ENCODE measurements at regions of chr19 and their contacts with region 1.

Region 1: DNA sequence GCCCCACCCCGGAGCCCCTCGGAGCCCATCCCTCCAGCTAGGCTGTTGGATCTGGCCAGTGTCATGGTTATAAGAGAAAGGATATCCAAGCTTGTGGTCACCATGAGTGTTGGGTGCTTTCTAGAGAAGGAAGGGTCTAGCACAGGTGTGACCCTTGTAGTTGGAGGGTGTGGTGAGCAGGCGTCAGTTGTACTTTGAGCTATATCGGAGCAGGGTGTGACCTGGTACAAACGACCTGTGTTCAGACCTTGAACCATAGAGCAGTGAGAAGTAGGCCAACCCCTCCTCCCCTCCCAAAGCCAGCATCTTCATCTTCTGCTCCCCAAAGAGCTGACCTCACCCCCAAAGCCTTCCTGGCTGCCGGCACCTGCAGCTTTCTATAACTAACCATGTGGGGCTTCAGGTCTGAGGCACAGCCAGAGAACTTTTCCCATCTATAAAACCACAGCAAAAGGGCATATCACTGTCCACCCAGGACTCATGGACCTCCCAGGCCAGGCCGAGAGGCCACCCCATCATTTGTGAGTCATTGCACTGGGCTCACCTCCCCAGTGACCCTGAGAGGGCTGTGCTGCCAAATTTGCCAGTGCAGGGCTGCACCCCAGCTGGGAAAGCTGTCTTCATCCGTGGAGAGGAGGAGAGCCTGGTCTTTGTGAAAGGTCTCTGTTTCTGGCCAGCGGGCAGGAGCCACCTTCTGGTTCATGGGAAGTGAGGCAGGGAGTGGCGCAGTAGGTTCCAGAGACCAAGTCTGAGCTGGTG is 14.2 kb downstream of the RAB8A start:
- DNase-seq: no peak
- H3K4me3 ChIP-seq: no peak overlapping the region
- H3K27ac ChIP-seq: no peak overlapping the region
- H3K4me1 ChIP-seq: no peaks in the 10 kb centered on the region
- H3K27me3 ChIP-seq: no peaks in the 10 kb centered on the region
- CTCF ChIP-seq: no peak

Region 2: GRCh38 chr19:16051254-16052025 is 74.5 kb before region 1 on chr19:
- CTCF ChIA-PET with region 1: no interaction called
- dilution Hi-C with region 1: loop called (anchors 5 kb)
- in situ Hi-C with region 1: no loop called
- intact Hi-C with region 1: no loop called
- DNase-seq: peak; percentile 26
- H3K4me3 ChIP-seq: no peak overlapping the region
- H3K27ac ChIP-seq: no peak overlapping the region
- H3K4me1 ChIP-seq: no peaks in the 10 kb centered on the region
- H3K27me3 ChIP-seq: no peaks in the 10 kb centered on the region
- CTCF ChIP-seq: no peak

Region 3: GRCh38 chr19:16078772-16079645 is 46.9 kb before region 1 on chr19:
- CTCF ChIA-PET with region 1: no interaction called
- dilution Hi-C with region 1: no loop called
- in situ Hi-C with region 1: no loop called
- intact Hi-C with region 1: no loop called
- DNase-seq: peak; percentile 94
- H3K4me3 ChIP-seq: peak overlapping the region; percentile 6 to 79 (median 41)
- H3K27ac ChIP-seq: peak overlapping the region; percentile 99
- H3K4me1 ChIP-seq: peaks cover 30% of the 10 kb centered on the region
- H3K27me3 ChIP-seq: no peaks in the 10 kb centered on the region
- CTCF ChIP-seq: no peak

Region 4: GRCh38 chr19:16197622-16198369 is 71.9 kb after region 1 on chr19 and contains the start of gene AP1M1:
- CTCF ChIA-PET with region 1: no interaction called
- dilution Hi-C with region 1: loop called (anchors 5 kb)
- in situ Hi-C with region 1: no loop called
- intact Hi-C with region 1: no loop called
- DNase-seq: peak; percentile 96
- H3K4me3 ChIP-seq: peak within 1 kb of the TSS; percentile 86 to 99 (median 95)
- H3K27ac ChIP-seq: peak within 1 kb of the TSS; percentile 74
- H3K4me1 ChIP-seq: peaks cover 25% of the 10 kb centered on the region
- H3K27me3 ChIP-seq: no peaks in the 10 kb centered on the region
- CTCF ChIP-seq: no peak
- total RNA-seq, gene AP1M1: 60.7 to 66.1 TPM

Measured in mammary epithelial cell (primary cell).